HEK293 (cell line): ENCODE measurements at regions of chr19 and their contacts with region 1.

Region 1: DNA sequence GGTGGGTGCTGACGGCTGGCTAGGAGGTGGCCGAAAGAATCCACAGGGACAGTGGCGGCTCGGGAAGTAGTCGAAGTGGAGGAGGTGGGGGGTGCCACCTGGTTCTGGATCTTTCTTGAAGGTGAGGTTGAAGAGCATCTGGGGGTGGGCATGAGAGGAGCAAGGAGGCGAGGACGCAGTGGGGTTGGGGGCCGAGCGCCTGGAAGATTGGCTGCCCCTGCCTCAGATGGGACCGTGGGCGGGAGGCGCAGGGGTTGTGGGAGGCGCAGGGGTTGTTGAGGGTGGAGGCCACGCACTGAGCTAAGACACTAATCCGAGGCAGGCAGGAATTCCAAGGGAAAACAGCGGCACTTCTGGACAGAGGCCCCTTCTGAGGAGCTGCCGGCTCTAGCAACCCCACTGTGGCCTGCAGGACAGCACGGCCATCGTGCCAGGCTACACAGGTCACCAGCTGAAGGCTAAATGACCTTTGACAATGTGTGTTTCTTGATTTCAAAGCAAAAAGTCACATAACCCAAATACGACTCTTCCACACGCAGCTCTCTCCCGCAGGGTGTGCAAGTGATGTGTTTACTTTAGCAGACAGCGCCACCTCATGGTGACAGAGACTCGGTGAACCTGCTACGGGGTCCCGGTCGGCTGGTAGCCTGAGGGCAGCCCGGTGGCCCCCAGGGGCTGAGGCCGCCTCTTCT is 44.1 kb upstream of the RANBP3 start:
- H3K4me3 ChIP-seq: no peak overlapping the region
- H3K27ac ChIP-seq: no peak overlapping the region
- H3K4me1 ChIP-seq: no peaks in the 10 kb centered on the region
- CTCF ChIP-seq: peak; percentile 84; the same call in 1 of the 2 replicates

Region 2: DNA sequence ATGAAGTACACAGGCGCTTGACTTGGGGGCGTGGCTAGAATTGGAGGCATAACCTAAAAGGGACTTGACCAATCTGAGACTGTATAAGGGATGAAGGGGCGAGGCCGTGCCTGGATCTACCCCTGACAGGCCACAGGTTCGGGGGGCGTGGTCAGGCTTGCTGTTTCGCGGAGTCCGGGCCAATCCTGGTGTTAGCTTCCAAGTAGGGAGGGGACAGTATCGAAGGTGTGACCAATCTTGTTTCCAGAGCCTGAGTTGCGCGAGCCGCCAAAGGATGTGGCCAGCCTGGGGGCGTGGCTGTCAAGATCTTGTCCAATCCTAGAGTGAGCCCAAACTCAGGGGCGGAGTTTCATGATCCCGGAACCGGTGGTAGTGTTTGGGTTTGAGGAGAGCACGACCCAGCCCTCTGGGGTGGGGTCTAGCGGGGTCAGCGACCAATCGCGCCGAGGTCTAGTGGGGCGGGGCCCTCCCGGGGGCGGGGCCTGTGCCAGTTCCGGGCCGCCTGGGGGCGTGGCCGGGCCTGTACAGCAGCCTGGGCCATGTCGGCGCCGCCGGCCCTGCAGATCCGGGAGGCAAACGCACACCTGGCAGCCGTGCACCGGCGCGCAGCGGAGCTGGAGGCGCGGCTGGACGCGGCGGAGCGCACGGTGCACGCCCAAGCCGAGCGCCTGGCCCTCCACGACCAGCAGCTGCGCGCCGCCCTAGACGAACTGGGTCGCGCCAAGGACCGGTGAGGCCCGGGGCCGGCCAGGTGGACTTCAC is 117.5 kb before region 1 on chr19 and contains the start of gene VMAC:
- CTCF ChIA-PET with region 1: interaction called, 11 read pairs
- POLR2A ChIA-PET with region 1: no interaction called
- H3K4me3 ChIP-seq: peak within 1 kb of the TSS; percentile 97
- H3K27ac ChIP-seq: peak within 1 kb of the TSS; percentile 88
- H3K4me1 ChIP-seq: no peaks in the 10 kb centered on the region
- CTCF ChIP-seq: no peak

Region 3: GRCh38 chr19:5977785-5978605 is 44.0 kb before region 1 on chr19 and contains the start of gene RANBP3:
- CTCF ChIA-PET with region 1: interaction called, 146 read pairs
- POLR2A ChIA-PET with region 1: no interaction called
- H3K4me3 ChIP-seq: peak within 1 kb of the TSS; percentile 98
- H3K27ac ChIP-seq: peak within 1 kb of the TSS; percentile 91
- H3K4me1 ChIP-seq: peaks cover 11% of the 10 kb centered on the region
- CTCF ChIP-seq: no peak; the same call in 1 of the 2 replicates

Region 4: GRCh38 chr19:5993648-5994358 is 28.2 kb before region 1 on chr19:
- CTCF ChIA-PET with region 1: interaction called, 146 read pairs
- POLR2A ChIA-PET with region 1: interaction called, 4 read pairs
- H3K4me3 ChIP-seq: no peak overlapping the region
- H3K27ac ChIP-seq: no peak overlapping the region
- H3K4me1 ChIP-seq: no peaks in the 10 kb centered on the region
- CTCF ChIP-seq: no peak

Region 5: GRCh38 chr19:6011794-6012193 is 10.2 kb before region 1 on chr19:
- CTCF ChIA-PET with region 1: interaction called, 28 read pairs
- POLR2A ChIA-PET with region 1: no interaction called
- H3K4me3 ChIP-seq: no peak overlapping the region
- H3K27ac ChIP-seq: no peak overlapping the region
- H3K4me1 ChIP-seq: no peaks in the 10 kb centered on the region
- CTCF ChIP-seq: no peak

Region 6: GRCh38 chr19:6048808-6049405 is 26.9 kb after region 1 on chr19:
- CTCF ChIA-PET with region 1: interaction called, 17 read pairs
- POLR2A ChIA-PET with region 1: no interaction called
- H3K4me3 ChIP-seq: no peak overlapping the region
- H3K27ac ChIP-seq: no peak overlapping the region
- H3K4me1 ChIP-seq: no peaks in the 10 kb centered on the region
- CTCF ChIP-seq: peak; percentile 52; the same call in 1 of the 2 replicates

Region 7: GRCh38 chr19:6362027-6362350 is 340.0 kb after region 1 on chr19:
- CTCF ChIA-PET with region 1: no interaction called
- POLR2A ChIA-PET with region 1: no interaction called
- H3K4me3 ChIP-seq: peak overlapping the region; percentile 82
- H3K27ac ChIP-seq: peak overlapping the region; percentile 67; the same call in 1 of the 2 replicates
- H3K4me1 ChIP-seq: no peaks in the 10 kb centered on the region
- CTCF ChIP-seq: no peak